Common myeloid progenitor, CD34-positive (primary cell): ENCODE measurements at regions of chr4 and their contacts with region 1.

Region 1: GRCh38 chr4:94304365-94304971 is 38.2 kb downstream of the HPGDS start:
- DNase-seq: peak; percentile 49 to 75 (median 61)
- H3K4me3 ChIP-seq: no peak overlapping the region
- H3K27ac ChIP-seq: no peak overlapping the region
- H3K4me1 ChIP-seq: peaks cover 0 to 4% (median 2%) of the 10 kb centered on the region in 4 experiments
- H3K27me3 ChIP-seq: no peaks in the 10 kb centered on the region

Region 2: GRCh38 chr4:94325835-94326234 is 21.4 kb after region 1 on chr4:
- CTCF ChIA-PET with region 1: interaction called, 11 read pairs
- POLR2A ChIA-PET with region 1: no interaction called
- DNase-seq: peak in 2 of 3 donors; percentile 66
- H3K4me3 ChIP-seq: no peak overlapping the region
- H3K27ac ChIP-seq: no peak overlapping the region
- H3K4me1 ChIP-seq: no peaks in the 10 kb centered on the region
- H3K27me3 ChIP-seq: no peaks in the 10 kb centered on the region

Region 3: GRCh38 chr4:94332983-94333590 is 28.6 kb after region 1 on chr4:
- CTCF ChIA-PET with region 1: interaction called, 18 read pairs
- POLR2A ChIA-PET with region 1: no interaction called
- DNase-seq: peak in 2 of 3 donors; percentile 51 to 55
- H3K4me3 ChIP-seq: peak overlapping the region in 3 of 7 experiments; percentile 4 to 57 (median 22)
- H3K27ac ChIP-seq: no peak overlapping the region
- H3K4me1 ChIP-seq: peaks cover 0 to 9% (median under 1%) of the 10 kb centered on the region in 4 experiments
- H3K27me3 ChIP-seq: no peaks in the 10 kb centered on the region

Region 4: DNA sequence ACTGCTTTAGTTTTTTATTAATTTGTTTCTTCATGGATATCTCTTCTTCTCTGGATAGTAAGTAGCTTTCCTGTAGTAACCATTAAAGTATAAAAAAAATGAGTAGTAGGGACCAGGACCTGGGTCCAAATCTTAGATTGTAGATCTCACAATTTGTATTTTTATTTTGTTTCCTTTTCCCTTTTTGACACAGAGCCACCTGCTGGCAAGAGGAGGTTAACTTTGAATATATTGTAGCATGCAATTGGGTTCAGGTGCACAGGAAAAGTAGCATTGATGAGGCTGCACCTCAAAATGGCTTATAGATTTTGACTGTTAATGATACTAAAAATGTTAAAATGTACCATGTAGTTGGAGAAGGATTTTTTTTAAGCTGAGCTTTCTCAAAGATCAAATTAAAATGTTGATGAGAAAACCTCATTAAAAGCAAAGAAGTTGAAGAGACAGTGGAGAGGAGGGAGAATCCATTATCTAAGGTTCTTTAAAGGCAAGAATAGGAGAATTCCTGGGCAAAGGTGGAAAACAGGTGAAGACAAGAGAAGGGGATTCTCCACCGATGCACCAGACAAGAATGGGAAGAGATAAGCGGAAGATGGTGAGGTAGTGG is 86.4 kb after region 1 on chr4:
- CTCF ChIA-PET with region 1: interaction called, 13 read pairs
- POLR2A ChIA-PET with region 1: no interaction called
- DNase-seq: peak; percentile 32 to 59 (median 48)
- H3K4me3 ChIP-seq: no peak overlapping the region
- H3K27ac ChIP-seq: no peak overlapping the region
- H3K4me1 ChIP-seq: no peaks in the 10 kb centered on the region
- H3K27me3 ChIP-seq: no peaks in the 10 kb centered on the region

Region 5: GRCh38 chr4:94406668-94407437 is 102.4 kb after region 1 on chr4:
- CTCF ChIA-PET with region 1: interaction called, 32 read pairs
- POLR2A ChIA-PET with region 1: no interaction called
- DNase-seq: peak; percentile 87 to 93 (median 88)
- H3K4me3 ChIP-seq: no peak overlapping the region
- H3K27ac ChIP-seq: no peak overlapping the region
- H3K4me1 ChIP-seq: no peaks in the 10 kb centered on the region
- H3K27me3 ChIP-seq: no peaks in the 10 kb centered on the region